Naive thymus-derived CD4-positive, alpha-beta T cell (primary cell): ENCODE measurements at regions of chrX and their contacts with region 1.

Region 1: DNA sequence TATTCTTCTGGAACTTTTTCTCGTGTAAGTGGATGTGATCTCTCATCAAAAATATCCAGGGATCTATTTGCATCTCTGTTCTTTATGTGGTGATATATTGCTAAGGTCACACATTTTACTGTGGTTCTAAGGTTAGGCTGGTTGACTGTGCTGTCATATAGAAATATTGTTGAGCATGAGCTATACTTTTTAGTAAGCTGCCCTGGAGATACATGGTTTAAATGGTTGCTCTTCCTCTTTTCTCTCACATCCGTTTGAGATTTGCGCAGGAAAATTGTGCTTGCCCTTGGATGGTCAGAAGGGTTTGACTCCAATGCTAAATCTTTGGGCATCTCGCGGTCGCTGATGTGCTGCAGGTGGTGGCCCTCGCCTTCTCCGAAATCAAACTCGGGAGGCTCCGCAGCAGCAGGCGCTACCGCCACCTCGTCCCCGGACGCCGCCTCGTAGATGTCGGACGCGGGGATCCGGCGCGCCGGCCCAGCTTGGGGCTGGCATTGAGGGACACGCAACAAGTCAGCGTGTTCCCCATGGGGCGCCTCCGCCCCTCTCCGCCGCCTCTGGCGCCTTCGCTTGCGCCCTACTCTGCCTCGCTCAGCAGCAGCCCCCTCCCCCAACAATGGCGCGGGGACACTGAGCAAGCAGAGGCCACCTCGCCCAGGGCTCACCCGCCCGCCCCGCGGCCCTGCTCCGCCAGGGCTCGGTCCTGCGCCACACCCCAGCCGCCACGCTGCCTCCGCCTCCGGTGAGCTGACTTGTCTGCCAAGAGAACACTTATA is 154.5 kb downstream of the MSN start:
- DNase-seq: peak; percentile 4 to 36 (median 22)
- ATAC-seq: peak; percentile 78
- H3K4me3 ChIP-seq: peak overlapping the region; percentile 47
- H3K4me3 Mint-ChIP-seq: peak overlapping the region; percentile 75 to 89 (median 80)
- H3K27ac ChIP-seq: peak overlapping the region; percentile 28
- H3K27ac Mint-ChIP-seq: peak overlapping the region; percentile 6 to 91 (median 78)
- H3K4me1 ChIP-seq: peaks cover 0 to 2% of the 10 kb centered on the region in 2 donors
- H3K4me1 Mint-ChIP-seq: peaks cover 0 to 16% (median 12%) of the 10 kb centered on the region in 7 donors
- H3K27me3 ChIP-seq: no peaks in the 10 kb centered on the region
- H3K27me3 Mint-ChIP-seq: peaks cover 0 to 18% (median 0%) of the 10 kb centered on the region in 5 donors

Region 2: DNA sequence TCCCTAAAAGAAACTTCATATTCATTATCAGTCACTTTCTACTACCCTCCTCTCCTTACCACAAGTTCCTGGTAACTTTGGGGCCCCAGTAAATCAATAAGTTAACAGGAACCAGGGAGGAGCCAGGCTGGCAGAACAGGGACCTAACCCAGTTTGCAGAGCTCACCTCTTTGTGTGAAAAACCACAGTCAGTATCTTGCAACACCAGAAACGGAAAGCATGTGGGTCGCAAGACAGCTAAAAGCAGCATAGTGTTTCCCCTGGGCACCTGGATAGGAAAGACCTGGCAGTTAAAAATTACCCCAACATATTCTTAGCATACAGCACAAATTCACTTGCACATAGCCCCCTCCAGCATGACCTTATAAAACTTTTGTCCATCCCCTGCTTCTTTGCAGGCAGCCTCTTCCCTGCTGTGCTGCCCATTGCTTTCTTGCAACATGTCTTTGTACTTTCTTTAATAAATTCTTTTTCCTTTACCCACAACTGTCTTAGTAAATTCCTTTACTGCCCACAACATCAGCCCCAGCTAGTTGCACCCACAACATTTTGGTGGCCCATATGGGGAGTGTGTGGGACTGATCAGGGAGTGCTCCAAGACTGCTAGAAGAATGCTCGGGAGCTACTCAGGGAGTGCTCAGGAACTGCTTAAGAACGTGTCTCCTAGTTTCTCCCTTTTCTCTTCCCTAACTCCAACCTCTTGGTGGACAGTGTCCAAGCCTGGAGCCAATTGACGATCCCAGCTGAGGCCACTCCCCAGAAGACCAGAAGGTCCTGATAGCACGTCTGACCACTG is 71.0 kb before region 1 on chrX:
- CTCF ChIA-PET with region 1: no interaction called
- POLR2A ChIA-PET with region 1: no interaction called
- intact Hi-C with region 1: loop called in 1 of 2 experiments (anchors 10 kb)
- DNase-seq: peak in 7 of 9 donors; percentile 14 to 49 (median 34)
- ATAC-seq: peak; percentile 77
- H3K4me3 ChIP-seq: no peak overlapping the region
- H3K4me3 Mint-ChIP-seq: peak overlapping the region; percentile 55 to 81 (median 74)
- H3K27ac ChIP-seq: no peak overlapping the region
- H3K27ac Mint-ChIP-seq: peak overlapping the region; percentile 57 to 85 (median 76)
- H3K4me1 ChIP-seq: peaks cover 15 to 21% of the 10 kb centered on the region in 2 donors
- H3K4me1 Mint-ChIP-seq: peaks cover 30 to 80% (median 63%) of the 10 kb centered on the region in 7 donors
- H3K27me3 ChIP-seq: no peaks in the 10 kb centered on the region
- H3K27me3 Mint-ChIP-seq: no peaks in the 10 kb centered on the region

Region 3: DNA sequence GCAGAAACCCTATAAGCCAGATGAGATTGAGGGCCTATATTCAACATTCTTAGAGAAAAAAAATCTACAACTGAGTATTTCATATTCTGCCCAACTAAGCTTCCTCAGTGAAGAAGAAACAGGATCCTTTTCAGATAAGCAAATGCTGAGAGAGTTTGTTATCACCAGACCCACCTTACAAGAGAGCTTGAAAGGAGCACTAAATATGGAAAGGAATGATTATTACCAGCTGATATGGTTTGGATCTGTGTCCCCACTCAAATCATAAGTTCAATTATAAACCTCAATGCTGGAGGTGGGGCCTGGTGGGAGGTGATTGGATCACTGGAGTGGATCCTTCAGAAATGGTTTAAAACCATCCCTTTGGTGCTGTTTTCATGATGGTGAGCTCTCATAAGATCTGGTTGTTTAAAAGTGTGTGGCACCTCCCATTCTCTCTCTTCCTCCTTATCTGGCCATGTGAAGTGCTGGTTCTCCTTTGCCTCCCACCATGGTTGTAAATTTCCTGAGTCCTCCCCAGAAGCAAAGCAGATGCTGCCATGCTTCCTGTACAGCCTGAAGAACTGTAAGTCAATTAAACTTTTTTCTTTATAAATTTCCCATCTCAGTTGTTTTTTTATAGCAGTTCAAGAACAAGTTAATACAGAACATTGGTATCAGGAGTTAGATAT is 10.2 kb before region 1 on chrX:
- CTCF ChIA-PET with region 1: no interaction called
- POLR2A ChIA-PET with region 1: no interaction called
- intact Hi-C with region 1: no loop called
- DNase-seq: no peak
- ATAC-seq: no peak
- H3K4me3 ChIP-seq: no peak overlapping the region
- H3K4me3 Mint-ChIP-seq: no peak overlapping the region
- H3K27ac ChIP-seq: no peak overlapping the region
- H3K27ac Mint-ChIP-seq: peak overlapping the region in 2 of 9 donors; percentile 25 to 72
- H3K4me1 ChIP-seq: no peaks in the 10 kb centered on the region
- H3K4me1 Mint-ChIP-seq: peaks cover 0 to 19% (median 8%) of the 10 kb centered on the region in 7 donors
- H3K27me3 ChIP-seq: no peaks in the 10 kb centered on the region
- H3K27me3 Mint-ChIP-seq: peaks cover 0 to 5% (median 0%) of the 10 kb centered on the region in 5 donors

Region 4: DNA sequence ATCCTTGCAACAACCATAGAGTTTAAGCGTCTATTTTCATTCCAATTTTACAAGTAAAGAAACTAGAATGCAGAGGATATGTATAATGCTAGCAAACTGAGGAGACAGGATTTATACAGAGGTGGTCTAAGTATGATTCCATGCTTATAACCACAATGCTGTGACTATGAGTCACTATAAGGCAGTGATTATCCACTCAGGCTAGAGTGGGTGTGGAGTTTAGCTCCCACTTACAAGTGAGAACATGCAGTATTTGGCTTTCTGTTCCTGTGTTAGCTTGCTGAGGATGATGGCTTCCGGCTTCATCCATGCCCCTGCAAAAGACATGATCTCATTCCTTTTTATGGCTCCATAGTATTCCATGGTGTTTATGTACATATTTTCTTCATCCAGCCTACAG is 858.5 kb after region 1 on chrX:
- CTCF ChIA-PET with region 1: no interaction called
- POLR2A ChIA-PET with region 1: no interaction called
- intact Hi-C with region 1: no loop called
- DNase-seq: no peak
- ATAC-seq: no peak
- H3K4me3 ChIP-seq: no peak overlapping the region
- H3K4me3 Mint-ChIP-seq: no peak overlapping the region
- H3K27ac ChIP-seq: no peak overlapping the region
- H3K27ac Mint-ChIP-seq: no peak overlapping the region
- H3K4me1 ChIP-seq: no peaks in the 10 kb centered on the region
- H3K4me1 Mint-ChIP-seq: no peaks in the 10 kb centered on the region
- H3K27me3 ChIP-seq: no peaks in the 10 kb centered on the region
- H3K27me3 Mint-ChIP-seq: peaks cover 0 to 12% (median 8%) of the 10 kb centered on the region in 5 donors